Right cardiac atrium (tissue), 5 donors: ENCODE measurements at regions of chr3 and their contacts with region 1.

Region 1: DNA sequence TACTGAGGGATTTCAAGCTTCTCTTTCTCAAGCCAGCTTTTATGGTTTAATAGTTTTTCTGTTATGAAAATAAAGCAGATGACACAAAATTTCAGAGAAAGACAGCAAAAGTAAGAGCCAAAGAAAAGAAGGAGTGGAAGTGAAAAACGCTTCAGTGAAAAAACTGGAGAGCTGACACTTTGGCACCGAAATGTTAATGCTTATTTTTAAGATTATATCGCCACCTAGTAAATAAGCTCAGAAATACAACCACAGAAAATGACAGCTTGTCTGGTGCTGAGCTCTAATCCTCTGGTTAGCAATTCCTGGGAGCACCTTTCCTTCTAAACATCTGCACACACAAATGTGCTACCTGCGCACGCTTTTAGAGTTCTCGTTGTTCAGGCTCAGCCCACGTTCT is 101.6 kb downstream of the ZPLD1 start:
- DNase-seq: no peak
- ATAC-seq: no peak
- H3K4me3 ChIP-seq: no peak overlapping the region
- H3K27ac ChIP-seq: no peak overlapping the region
- H3K4me1 ChIP-seq: no peaks in the 10 kb centered on the region
- H3K27me3 ChIP-seq: no peaks in the 10 kb centered on the region

Region 2: DNA sequence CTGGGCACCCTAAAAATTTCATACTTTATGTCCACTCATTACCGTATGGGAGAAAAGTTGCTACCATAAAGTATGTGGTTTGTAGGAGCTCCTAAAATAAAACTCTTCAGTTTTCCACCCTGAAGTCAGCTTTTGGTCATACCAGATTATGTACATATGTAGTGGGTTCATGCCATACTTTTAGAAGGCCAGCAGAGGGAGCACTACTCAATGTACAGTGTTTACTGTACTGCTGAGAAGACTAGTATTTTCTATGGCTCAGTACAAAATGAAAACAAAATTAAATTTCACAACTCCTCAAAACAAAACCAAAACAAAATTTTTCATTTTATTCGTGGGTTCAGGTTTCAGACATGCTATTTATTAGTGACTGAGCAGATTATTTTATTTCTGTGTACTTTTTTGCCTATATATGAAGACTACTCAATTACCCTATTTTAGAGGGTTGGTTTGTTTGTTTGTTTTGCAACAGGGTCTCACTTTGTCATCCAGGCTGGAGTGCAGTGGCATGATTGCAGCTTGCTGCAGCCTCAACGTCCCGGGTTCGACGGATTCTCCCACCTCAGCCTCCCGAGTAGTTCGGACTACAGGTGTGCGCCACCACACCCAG is 733.2 kb before region 1 on chr3:
- intact Hi-C with region 1: loop called in 3 of 4 experiments (anchors 10 kb)
- DNase-seq: peak in 1 of 3 donors; percentile 44
- ATAC-seq: peak; percentile 87 to 92
- H3K4me3 ChIP-seq: no peak overlapping the region
- H3K27ac ChIP-seq: no peak overlapping the region
- H3K4me1 ChIP-seq: peaks cover 2% of the 10 kb centered on the region
- H3K27me3 ChIP-seq: no peaks in the 10 kb centered on the region

Region 3: DNA sequence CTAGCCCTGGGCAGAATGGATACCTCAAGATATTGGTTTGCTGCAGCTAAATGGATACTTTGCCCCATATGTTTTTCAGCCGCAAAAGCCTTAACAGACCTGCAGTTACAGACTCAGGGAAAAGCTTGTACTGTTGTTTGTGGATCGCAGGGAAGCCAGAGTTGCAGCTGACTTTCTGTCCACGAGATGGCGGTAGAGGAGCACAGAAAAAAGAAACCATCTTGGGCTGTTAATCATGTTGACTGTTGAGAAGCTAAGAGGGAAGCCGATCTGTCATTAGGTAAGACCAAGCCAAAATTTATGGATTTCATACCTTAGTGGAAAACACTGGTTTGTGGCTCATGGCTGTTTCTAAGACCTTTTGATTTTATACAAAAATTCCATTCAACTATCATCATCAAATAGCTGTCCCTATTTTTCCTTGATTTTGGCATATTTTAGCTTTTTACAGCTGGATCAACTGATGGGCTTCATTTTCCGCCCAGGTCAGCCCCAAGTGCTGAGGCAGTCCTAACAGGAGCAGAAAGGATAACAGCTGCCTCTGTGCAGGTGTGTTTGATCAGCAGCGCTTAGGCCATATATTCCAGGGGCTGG is 307.3 kb before region 1 on chr3:
- intact Hi-C with region 1: loop called (anchors 2 to 5 kb)
- DNase-seq: peak; percentile 50 to 83 (median 69)
- ATAC-seq: peak; percentile 64 to 80
- H3K4me3 ChIP-seq: no peak overlapping the region
- H3K27ac ChIP-seq: no peak overlapping the region
- H3K4me1 ChIP-seq: no peaks in the 10 kb centered on the region
- H3K27me3 ChIP-seq: no peaks in the 10 kb centered on the region

Region 4: GRCh38 chr3:102235679-102236078 is 300.8 kb before region 1 on chr3:
- intact Hi-C with region 1: loop called in 2 of 4 experiments (anchors 2 to 5 kb)
- DNase-seq: no peak
- ATAC-seq: no peak
- H3K4me3 ChIP-seq: no peak overlapping the region
- H3K27ac ChIP-seq: no peak overlapping the region
- H3K4me1 ChIP-seq: no peaks in the 10 kb centered on the region
- H3K27me3 ChIP-seq: no peaks in the 10 kb centered on the region

Region 5: DNA sequence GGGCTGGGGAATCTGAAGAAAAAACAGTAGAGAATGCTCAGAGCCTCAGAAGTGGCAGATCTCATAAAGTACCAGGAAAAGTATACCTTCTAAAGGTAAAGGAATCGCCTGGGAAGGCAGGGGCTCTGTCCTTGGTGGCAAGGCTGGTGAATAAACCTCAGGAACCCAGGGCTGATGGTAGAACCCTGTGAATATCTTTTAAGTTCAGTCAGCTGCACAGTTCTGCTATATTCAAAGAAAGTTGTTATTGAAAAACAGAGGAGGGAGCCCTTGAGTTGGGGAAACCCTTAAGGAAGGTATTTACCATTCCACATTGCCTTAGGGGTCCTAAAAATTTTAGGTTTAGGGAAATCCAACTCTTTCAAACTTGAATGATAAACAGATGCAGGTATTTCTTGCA is 70.5 kb before region 1 on chr3:
- intact Hi-C with region 1: loop called in 1 of 4 experiments (anchors 10 kb)
- DNase-seq: no peak
- ATAC-seq: no peak
- H3K4me3 ChIP-seq: no peak overlapping the region
- H3K27ac ChIP-seq: no peak overlapping the region
- H3K4me1 ChIP-seq: no peaks in the 10 kb centered on the region
- H3K27me3 ChIP-seq: no peaks in the 10 kb centered on the region